ENCODE measurements at regions of chr19 and their contacts with region 1.

Region 1: DNA sequence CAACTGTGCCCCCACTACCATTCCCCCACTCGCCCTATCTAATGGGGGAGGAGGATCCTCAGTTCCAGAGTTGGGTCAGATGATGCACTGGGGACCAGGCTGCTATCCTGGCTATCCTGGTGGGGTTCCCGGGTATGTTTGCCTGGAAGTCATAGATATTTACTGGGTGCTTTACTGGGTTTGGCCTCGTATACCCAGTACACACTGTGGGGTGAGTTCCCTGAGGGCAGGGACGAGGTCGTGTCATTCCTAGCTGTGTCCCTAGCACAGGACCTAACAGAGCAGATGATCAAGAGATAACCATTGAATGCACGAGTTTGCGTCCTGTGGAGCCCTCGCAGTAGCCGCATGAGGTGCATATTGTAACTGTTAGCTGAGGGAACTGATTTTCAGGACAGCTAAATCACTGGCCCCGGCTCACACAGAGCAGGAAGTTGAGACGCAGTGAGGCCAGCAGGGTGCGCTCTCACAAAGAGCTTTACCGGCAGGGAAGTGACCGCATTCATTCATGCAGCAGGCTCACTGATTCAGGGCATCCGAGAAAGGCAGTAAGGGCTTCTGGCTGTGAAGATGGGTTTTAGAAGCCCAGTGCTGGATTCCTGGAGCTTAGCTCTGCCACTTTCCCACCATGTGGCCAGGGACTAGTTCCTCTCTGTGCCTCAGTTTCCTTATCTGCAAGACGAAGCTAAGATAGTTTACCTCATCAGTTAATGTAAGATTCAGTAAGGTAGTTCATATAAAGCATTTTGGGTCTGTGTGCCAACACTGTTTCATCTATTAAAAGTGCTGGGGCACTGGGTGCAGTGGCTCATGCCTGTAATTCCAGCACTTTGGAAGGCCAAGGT is 6.0 kb downstream of the RUVBL2 start:
- DNase-seq: peak; percentile 41
- ATAC-seq: peak; percentile 86
- H3K4me3 Mint-ChIP-seq: no peak overlapping the region
- H3K27ac Mint-ChIP-seq: no peak overlapping the region
- H3K4me1 Mint-ChIP-seq: peaks cover 11% of the 10 kb centered on the region
- H3K27me3 Mint-ChIP-seq: no peaks in the 10 kb centered on the region
- CTCF ChIP-seq: no peak

Region 2: DNA sequence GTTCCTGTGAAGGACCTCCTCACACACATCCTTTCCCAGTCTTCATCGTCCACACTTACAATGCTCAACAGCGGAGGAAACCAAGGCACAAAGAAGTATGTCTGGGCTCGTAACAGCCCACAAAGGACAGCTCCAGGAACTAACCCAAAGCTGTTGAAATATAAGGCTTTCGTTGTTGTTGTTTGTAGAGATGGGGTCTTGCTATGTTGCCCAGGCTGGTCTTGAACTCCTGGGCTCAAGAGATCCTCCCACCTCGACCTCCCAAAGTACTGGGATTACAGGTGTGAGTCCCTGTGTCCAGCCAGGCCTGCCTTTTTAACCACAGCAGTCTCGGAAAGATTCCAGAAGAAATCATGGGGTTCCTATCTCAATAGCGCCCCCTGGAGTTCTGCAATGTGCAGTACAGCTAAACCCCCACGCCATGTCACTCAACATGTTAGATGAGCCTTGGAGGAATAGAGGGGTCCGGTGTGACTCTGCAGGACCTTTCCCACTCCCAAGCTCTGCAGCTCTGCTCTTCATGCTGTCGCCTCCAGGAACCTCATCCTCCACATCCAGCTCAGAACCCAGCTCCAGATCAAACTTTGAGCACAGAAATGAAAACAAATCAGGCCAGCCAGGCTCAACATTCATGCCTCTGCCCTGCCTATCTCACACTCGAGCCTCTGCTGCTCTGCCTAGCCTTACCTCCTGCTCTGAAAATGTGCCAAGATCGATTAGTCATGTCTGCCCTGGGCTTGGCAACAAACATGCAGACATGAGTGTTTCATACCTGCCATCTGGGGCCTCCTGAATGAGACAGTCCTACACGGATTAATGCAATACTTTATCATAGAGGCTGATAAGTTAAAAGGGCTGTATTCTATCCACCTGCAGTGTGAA is 896.6 kb before region 1 on chr19:
- CTCF ChIA-PET with region 1: no interaction called
- POLR2A ChIA-PET with region 1: no interaction called
- intact Hi-C with region 1: no loop called
- DNase-seq: no peak
- ATAC-seq: no peak
- H3K4me3 Mint-ChIP-seq: no peak overlapping the region
- H3K27ac Mint-ChIP-seq: no peak overlapping the region
- H3K4me1 Mint-ChIP-seq: peaks cover 7% of the 10 kb centered on the region
- H3K27me3 Mint-ChIP-seq: no peaks in the 10 kb centered on the region
- CTCF ChIP-seq: no peak

Region 3: GRCh38 chr19:49073514-49074378 is 74.0 kb after region 1 on chr19:
- CTCF ChIA-PET with region 1: interaction called, 4 read pairs
- POLR2A ChIA-PET with region 1: no interaction called
- intact Hi-C with region 1: loop called (anchors 2 kb)
- DNase-seq: no peak
- ATAC-seq: no peak
- H3K4me3 Mint-ChIP-seq: peak overlapping the region; percentile 2
- H3K27ac Mint-ChIP-seq: no peak overlapping the region
- H3K4me1 Mint-ChIP-seq: peaks cover 19% of the 10 kb centered on the region
- H3K27me3 Mint-ChIP-seq: peaks cover 50% of the 10 kb centered on the region
- CTCF ChIP-seq: no peak

Region 4: DNA sequence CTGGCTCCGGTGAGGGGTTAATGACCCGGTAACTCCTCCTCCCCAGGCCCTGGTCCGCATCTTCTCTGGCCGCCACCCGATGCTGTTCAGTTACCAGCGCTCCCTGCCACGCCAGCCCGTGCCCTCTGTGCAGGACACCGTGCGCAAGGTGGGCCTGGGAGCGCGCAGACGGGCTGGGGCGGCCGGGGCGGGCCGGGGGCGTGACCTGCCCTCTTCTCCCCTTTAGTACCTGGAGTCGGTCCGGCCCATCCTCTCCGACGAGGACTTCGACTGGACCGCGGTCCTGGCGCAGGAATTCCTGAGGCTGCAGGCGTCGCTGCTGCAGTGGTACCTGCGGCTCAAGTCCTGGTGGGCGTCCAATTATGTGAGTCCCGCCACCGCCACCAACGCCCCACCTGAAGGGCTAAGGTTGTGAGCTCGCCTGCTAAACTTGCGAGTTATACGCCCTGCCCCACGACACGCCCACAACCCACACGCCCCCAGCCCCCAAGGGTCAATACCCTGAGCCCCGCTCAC is 701.6 kb after region 1 on chr19:
- CTCF ChIA-PET with region 1: no interaction called
- POLR2A ChIA-PET with region 1: no interaction called
- intact Hi-C with region 1: no loop called
- DNase-seq: no peak
- ATAC-seq: no peak
- H3K4me3 Mint-ChIP-seq: no peak overlapping the region
- H3K27ac Mint-ChIP-seq: no peak overlapping the region
- H3K4me1 Mint-ChIP-seq: no peaks in the 10 kb centered on the region
- H3K27me3 Mint-ChIP-seq: peaks cover 2% of the 10 kb centered on the region
- CTCF ChIP-seq: no peak

Measured in activated B cell treated with CpG ODN at 0.5 μM for 24 hours (primary cell).